ENCODE measurements at regions of chr16 and their contacts with region 1.

Region 1: GRCh38 chr16:64250866-64251265 is 871.0 kb downstream of the CDH11 start:
- DNase-seq: no peak
- ATAC-seq: peak; percentile 87 to 97 (median 91)
- H3K4me3 ChIP-seq: no peak overlapping the region
- H3K27ac ChIP-seq: peak overlapping the region; percentile 54
- H3K4me1 ChIP-seq: peaks cover 21% of the 10 kb centered on the region
- H3K27me3 ChIP-seq: no peaks in the 10 kb centered on the region
- CTCF ChIP-seq: no peak

Region 2: DNA sequence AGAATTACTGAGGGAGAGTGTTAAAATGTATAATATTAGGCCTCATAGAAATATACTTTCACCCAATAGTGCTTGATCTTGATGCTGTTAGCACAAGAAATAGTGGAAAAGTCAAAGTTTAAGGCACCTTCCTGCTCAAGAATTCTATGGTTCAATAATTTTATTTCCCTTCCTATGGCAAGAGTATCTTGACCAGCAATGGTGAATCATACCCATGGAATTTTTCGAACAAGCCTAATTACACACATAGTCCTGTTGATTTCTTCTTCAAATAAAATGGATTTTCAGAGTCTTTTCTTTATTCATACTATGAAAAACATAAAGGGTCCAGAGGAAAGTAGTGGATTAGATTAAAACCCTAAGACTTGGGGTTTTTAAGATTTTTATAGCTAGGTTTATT is 60.4 kb after region 1 on chr16:
- intact Hi-C with region 1: loop called in 1 of 2 experiments (anchors 10 kb)
- DNase-seq: no peak
- ATAC-seq: no peak
- H3K4me3 ChIP-seq: no peak overlapping the region
- H3K27ac ChIP-seq: no peak overlapping the region
- H3K4me1 ChIP-seq: no peaks in the 10 kb centered on the region
- H3K27me3 ChIP-seq: no peaks in the 10 kb centered on the region
- CTCF ChIP-seq: no peak

Region 3: GRCh38 chr16:65098916-65099315 is 848.0 kb after region 1 on chr16:
- intact Hi-C with region 1: loop called in 1 of 2 experiments (anchors 10 kb)
- DNase-seq: no peak
- ATAC-seq: no peak
- H3K4me3 ChIP-seq: no peak overlapping the region
- H3K27ac ChIP-seq: no peak overlapping the region
- H3K4me1 ChIP-seq: no peaks in the 10 kb centered on the region
- H3K27me3 ChIP-seq: no peaks in the 10 kb centered on the region
- CTCF ChIP-seq: no peak

Measured in psoas muscle (tissue), 8 donors.